ENCODE measurements at regions of chr12 and their contacts with region 1.

Region 1: DNA sequence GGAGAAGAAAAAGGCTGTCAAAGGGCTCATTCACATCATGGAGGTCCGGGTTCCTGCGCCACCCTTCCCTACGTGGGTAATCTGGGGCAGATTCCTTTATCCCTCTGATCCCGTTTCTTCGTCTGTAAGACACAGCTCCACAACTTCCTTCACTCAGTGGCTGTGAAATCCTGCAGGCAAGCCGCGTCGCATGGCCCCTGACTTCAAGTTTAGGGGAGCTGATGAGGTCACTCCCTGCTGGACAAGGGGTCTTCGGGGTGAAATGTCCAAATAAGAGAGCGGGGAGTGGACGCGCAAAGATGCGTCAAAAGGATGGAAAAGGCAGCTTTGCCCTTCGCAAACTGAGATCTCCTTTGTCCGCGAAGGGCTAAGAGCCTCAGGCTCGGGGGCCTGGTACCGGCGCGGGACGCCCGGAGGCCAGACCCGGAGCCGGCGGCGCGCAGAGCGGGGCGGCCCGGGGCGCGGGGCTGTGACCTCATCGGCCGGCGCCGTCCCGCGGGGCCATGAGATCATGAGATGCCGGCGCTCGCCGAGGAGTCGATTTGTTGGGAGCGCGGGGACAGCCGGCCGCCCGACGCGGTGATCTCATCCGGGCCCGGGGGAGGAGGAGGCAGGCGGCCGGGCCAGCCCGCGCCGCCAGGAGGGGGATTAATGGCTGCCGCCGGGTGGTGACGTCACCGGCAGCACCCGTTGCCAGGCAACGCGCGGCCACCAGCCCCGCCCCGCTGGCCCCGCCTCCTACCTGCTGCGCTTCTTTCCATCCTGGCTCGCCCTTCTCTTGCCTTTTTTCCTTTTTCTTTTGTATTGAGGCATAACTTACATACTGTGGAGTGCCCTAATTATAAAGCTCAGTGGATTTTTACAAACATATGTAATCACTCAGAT is 62.1 kb downstream of the HRK start:
- DNase-seq: peak; percentile 97
- H3K4me3 ChIP-seq: peak overlapping the region; percentile 57 to 83 (median 76)
- H3K27ac ChIP-seq: peak overlapping the region; percentile 92 to 99 (median 96)
- H3K4me1 ChIP-seq: peaks cover 0 to 11% (median 10%) of the 10 kb centered on the region in 4 donors
- H3K27me3 ChIP-seq: no peaks in the 10 kb centered on the region
- CTCF ChIP-seq: no peak
- EP300 ChIP-seq: no peak
- POLR2A ChIP-seq: peak in 1 of 2 donors; percentile 25

Region 2: GRCh38 chr12:116737774-116738700 is 81.2 kb before region 1 on chr12 and contains the starts of genes RNFT2 and SPRING1:
- intact Hi-C with region 1: loop called (anchors 1 kb)
- DNase-seq: peak; percentile 100
- H3K4me3 ChIP-seq: peak within 1 kb of the TSS; percentile 66 to 92 (median 88)
- H3K27ac ChIP-seq: peak within 1 kb of the TSS; percentile 65 to 85 (median 78)
- H3K4me1 ChIP-seq: peaks cover 0 to 16% (median 11%) of the 10 kb centered on the region in 4 donors
- H3K27me3 ChIP-seq: no peaks in the 10 kb centered on the region
- CTCF ChIP-seq: no peak
- EP300 ChIP-seq: no peak
- POLR2A ChIP-seq: no peak
- total RNA-seq, gene RNFT2: 0.36 to 4.3 (median 0.80) TPM
- total RNA-seq, gene SPRING1: 10.5 to 18.0 (median 13.7) TPM

Region 3: GRCh38 chr12:116916714-116917114 is 97.5 kb after region 1 on chr12:
- intact Hi-C with region 1: loop called (anchors 5 kb)
- DNase-seq: no peak
- H3K4me3 ChIP-seq: no peak overlapping the region
- H3K27ac ChIP-seq: no peak overlapping the region
- H3K4me1 ChIP-seq: peaks cover 0 to 15% (median 9%) of the 10 kb centered on the region in 4 donors
- H3K27me3 ChIP-seq: no peaks in the 10 kb centered on the region
- CTCF ChIP-seq: no peak
- EP300 ChIP-seq: no peak
- POLR2A ChIP-seq: no peak

Region 4: DNA sequence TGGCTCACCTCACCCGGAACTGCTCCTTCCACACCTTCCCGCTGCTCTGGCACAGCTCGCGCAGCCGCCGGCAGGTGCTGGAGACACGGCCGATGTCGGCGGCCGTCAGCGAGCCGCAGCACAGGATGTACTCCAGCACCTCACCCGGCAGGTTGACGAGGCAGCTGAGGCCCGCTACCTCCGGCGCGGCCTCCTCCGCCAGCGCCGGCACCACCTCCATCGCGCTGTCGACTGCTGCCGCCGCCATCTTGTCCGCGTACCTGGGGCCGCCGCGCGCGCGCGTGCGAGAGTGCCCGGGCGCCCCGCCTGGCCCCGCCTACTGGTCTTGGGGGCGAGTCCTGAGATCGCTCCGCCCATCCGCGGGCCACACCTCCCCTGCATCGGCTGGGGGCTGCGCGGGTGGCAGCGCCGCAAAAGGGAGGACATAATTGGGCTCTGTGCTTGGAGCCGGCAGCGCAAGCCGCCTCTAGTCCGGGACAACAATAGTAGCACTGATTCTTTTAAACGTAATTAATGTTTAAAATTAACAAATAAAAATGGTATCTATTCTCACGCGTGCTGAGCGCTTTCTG is 371.1 kb after region 1 on chr12 and contains the start of gene FBXO21:
- intact Hi-C with region 1: loop called (anchors 5 kb)
- DNase-seq: peak; percentile 95
- H3K4me3 ChIP-seq: peak within 1 kb of the TSS; percentile 75 to 92 (median 82)
- H3K27ac ChIP-seq: peak within 1 kb of the TSS; percentile 77 to 84 (median 81)
- H3K4me1 ChIP-seq: peaks cover 0 to 18% (median 16%) of the 10 kb centered on the region in 4 donors
- H3K27me3 ChIP-seq: no peaks in the 10 kb centered on the region
- CTCF ChIP-seq: no peak
- EP300 ChIP-seq: no peak
- POLR2A ChIP-seq: peak in 1 of 2 donors; percentile 35
- total RNA-seq, gene FBXO21: 40.7 to 134 (median 97.2) TPM

Measured in sigmoid colon (tissue), 7 donors.